PC-9 (cell line): ENCODE measurements at regions of chr14 and their contacts with region 1.

Region 1: DNA sequence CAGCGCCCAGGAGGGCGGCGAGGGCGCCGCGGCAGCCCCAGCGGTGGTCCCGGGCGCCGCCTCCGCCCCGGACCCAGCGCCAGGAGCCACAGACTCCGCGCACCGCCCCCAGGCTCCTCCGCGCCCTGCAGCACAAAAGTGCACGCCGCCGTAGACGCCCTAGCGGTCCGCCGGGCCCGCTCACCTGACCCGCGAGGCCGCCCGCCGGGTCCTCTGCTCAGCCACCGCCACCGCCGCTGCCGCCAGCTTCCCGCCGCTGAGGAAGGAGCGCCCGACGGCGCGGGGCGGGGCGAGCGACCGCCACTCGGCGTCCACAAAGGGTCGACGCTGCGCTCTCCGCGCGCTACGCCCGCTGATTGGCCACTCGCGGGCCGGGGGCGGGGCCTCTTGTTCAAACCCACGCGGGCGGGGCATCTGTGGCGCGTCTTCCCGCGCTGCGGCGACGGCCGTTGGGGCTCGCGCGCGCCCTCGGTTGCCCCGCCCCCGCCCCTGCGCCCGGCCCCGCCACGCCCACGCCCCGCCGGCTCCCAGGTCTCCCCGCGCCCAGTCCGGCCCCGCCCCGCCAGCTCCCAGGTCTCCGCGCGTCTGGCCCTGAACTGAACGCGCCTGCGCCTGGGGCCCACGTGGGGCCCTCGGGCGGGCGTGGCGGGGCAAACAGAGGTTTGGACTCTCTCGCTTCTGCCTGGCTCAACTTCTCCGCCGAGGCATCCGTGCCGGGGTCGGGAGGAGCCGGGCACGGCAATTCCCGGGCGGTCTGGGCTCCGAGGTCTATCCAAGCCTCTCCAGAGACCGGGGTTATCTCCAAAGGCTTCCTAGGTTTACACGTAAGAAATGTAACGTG is at the start of gene CDCA4:
- DNase-seq: peak; percentile 84 to 93
- H3K4me3 ChIP-seq: peak within 1 kb of the TSS; percentile 86
- H3K27ac ChIP-seq: peak within 1 kb of the TSS; percentile 95
- H3K4me1 ChIP-seq: peaks cover 78% of the 10 kb centered on the region
- H3K27me3 ChIP-seq: no peaks in the 10 kb centered on the region
- CTCF ChIP-seq: no peak
- total RNA-seq, gene CDCA4: 24.9 and 27.7 TPM in 2 replicates

Region 2: DNA sequence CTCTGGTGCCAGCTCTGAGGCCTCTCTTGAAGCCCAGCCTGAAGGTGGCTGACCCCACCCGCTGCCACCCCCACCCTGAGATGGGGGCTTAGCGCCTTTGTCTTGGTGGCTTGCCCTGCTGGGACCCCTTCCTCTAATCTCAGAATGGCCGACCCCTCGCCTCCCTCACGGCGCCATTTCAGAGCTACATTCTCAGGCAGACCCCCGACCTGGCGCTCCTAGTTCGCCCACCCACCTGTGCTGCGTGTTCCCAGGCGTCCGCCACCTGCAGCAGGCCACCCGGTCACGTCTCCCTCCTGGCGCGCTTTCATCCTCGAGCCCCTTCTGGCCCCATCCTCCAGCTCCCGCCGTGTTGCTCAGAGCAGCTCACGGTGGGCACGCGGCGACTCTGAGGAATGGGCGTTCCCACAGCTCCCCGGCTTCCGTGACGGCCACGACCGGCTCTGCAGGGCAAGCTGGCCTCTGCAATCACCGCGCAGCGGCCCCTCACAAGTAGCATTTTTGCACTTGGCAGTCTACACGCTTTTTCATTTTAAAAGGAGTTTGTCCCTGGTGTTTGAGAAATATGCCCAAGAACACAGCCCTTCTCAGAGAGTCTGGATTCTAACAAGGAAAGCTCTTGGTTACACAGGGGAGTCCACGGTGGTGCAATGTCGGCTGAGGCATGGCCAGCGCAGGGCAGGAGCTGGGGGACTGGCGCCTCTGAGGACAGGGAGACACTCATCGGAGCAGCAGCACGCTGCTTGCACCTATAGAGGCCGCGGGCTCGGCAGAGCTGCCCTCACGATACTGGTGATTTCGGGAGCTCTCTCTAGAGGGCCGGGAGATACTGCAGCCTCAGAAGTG is 547.2 kb before region 1 on chr14:
- CTCF ChIA-PET with region 1: no interaction called
- POLR2A ChIA-PET with region 1: no interaction called
- intact Hi-C with region 1: no loop called
- DNase-seq: no peak
- H3K4me3 ChIP-seq: no peak overlapping the region
- H3K27ac ChIP-seq: no peak overlapping the region
- H3K4me1 ChIP-seq: no peaks in the 10 kb centered on the region
- H3K27me3 ChIP-seq: peaks cover 70% of the 10 kb centered on the region
- CTCF ChIP-seq: no peak

Region 3: DNA sequence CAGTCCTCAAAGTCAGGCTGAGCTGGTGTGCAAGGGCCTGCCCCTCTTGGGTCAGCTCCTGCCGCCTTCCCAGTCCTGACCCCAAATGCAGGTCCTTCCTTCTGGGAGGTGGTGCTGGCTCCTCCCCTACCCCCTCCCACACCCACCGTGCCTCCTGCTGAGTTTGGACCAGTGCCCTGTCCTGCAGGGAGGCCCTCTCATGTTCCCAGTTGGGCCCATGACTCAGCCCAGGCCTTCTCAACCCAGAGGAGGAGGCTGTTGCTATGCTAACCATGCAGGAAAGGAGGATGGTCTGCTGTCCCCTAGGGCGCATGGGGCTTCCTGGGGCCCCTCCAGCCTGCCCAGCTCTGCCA is 215.7 kb before region 1 on chr14:
- CTCF ChIA-PET with region 1: no interaction called
- POLR2A ChIA-PET with region 1: no interaction called
- intact Hi-C with region 1: no loop called
- DNase-seq: peak in 1 of 2 experiments; percentile 62
- H3K4me3 ChIP-seq: no peak overlapping the region
- H3K27ac ChIP-seq: no peak overlapping the region
- H3K4me1 ChIP-seq: peaks cover 9% of the 10 kb centered on the region
- H3K27me3 ChIP-seq: no peaks in the 10 kb centered on the region
- CTCF ChIP-seq: no peak

Region 4: DNA sequence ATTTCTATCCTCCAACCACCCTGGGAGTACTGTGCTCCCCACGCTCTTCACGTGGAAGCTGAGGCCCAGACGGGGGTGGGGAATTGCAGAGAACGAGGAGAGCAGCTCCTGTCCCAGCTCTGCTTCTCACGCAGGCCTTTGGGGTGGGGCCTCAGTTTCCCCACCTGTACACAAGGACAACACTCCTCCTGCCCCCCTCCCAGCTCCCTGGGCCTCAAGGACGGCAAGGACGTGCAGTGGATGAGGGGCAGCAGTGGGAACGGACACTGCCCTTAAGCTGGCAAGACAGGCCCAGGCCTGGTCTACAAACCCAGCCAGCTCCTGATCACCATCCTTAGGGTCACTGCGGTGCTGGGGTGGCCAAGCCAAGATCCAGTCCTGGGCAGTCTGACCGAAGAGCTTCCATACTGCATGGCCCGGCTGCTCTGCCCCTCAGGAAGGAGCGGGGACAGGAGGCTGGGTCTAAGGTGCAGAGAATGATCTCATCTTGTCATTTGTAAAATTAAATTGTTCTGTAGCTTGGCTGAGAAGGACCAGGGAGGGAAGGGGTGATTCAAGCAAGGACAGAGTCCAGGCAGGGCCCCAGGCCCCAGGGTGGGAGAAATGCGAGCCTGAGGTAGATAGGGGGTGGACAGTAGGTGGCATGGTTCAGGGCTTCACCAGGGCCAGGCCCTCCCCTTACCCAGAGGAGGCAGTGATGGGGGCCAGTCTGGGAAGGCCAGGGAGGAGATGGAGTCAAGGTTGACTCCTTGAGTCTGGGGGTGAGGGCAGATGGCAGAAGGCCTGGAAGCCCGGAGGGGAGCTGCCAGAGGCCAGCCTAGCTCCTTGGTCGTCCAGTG is 36.8 kb before region 1 on chr14:
- CTCF ChIA-PET with region 1: no interaction called
- POLR2A ChIA-PET with region 1: interaction called, 10 read pairs
- intact Hi-C with region 1: no loop called
- DNase-seq: no peak
- H3K4me3 ChIP-seq: no peak overlapping the region
- H3K27ac ChIP-seq: no peak overlapping the region
- H3K4me1 ChIP-seq: peaks cover 11% of the 10 kb centered on the region
- H3K27me3 ChIP-seq: no peaks in the 10 kb centered on the region
- CTCF ChIP-seq: no peak

Region 5: DNA sequence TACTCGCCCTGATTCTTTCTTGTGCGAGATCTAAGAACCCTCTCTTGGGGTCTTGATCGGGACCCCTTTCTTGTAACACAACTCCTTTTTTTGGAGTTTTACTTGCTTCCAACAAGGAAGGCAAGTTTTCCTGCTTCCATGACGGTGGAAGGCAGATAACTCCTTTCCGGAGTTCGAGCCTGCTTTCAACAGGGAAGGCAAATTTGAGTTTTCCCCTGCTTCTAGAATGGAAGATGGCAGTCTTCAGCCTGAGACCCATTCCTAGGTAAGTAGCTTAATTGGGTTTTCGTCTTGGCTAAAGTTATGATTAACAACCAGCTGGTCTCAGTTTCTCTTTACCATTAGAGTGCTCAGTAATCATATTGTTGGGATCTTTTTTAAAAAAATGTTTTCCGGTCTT is 11.9 kb after region 1 on chr14:
- CTCF ChIA-PET with region 1: no interaction called
- POLR2A ChIA-PET with region 1: no interaction called
- intact Hi-C with region 1: loop called (anchors 1 kb)
- DNase-seq: no peak
- H3K4me3 ChIP-seq: peak overlapping the region; percentile 46; the same call in 1 of the 2 replicates
- H3K27ac ChIP-seq: peak overlapping the region; percentile 98
- H3K4me1 ChIP-seq: peaks cover 29% of the 10 kb centered on the region
- H3K27me3 ChIP-seq: no peaks in the 10 kb centered on the region
- CTCF ChIP-seq: no peak

Region 6: DNA sequence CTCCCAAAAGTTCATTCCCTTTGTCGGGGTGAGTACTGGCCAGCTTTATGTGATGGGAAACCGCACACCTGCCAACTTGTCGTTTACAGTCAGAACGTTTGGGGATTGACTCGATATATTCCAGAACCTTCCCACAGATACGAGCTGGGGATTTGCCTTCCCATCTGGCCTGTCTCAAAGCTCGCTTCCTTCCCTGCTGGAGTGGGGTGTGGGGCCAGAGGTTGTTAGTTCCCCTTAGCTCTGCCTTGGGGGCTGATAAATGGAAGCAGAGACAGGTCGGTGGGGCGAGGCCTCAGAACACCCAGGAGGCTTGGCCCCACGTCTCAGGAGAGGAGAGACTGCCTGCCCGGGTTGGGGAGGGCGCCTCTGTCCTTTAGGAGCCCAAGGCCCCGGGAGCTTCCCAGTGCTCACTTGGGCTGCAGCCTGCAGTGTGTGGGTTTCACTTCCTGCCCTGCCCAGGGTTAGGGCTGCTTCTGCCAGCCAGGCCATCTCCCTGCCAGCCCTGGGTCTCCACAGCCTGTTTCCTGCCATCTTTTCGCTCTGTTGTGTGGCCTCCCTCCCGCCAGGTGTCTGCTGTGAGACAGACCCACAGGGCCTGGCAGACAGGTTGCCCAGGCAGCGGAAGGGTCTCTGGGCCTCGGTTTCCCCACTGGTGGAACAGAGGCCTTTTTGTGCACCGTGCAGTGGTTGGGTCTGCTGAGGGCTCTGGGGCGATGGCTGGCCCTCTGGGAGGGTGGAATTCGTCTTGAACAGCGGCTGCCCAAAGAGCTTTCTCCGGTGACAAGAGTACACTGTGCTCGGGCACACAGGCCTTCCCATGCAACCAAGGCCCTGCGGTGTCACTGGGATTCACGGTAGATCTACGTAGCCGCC is 369.2 kb after region 1 on chr14:
- CTCF ChIA-PET with region 1: no interaction called
- POLR2A ChIA-PET with region 1: no interaction called
- intact Hi-C with region 1: no loop called
- DNase-seq: no peak
- H3K4me3 ChIP-seq: no peak overlapping the region
- H3K27ac ChIP-seq: no peak overlapping the region
- H3K4me1 ChIP-seq: no peaks in the 10 kb centered on the region
- H3K27me3 ChIP-seq: no peaks in the 10 kb centered on the region
- CTCF ChIP-seq: no peak